Heart left ventricle (tissue), 16 donors: ENCODE measurements at regions of chr7 and their contacts with region 1.

Region 1: GRCh38 chr7:44748045-44748947 is at the start of gene ZMIZ2:
- DNase-seq: peak; percentile 94 to 98 (median 96)
- ATAC-seq: peak; percentile 95 to 99 (median 98)
- H3K4me3 ChIP-seq: peak within 1 kb of the TSS; percentile 83 to 98 (median 92)
- H3K27ac ChIP-seq: peak within 1 kb of the TSS; percentile 92 to 100 (median 96)
- H3K4me1 ChIP-seq: peaks cover 6 to 49% (median 28%) of the 10 kb centered on the region in 12 donors
- H3K27me3 ChIP-seq: no peaks in the 10 kb centered on the region
- CTCF ChIP-seq: no peak
- POLR2A ChIP-seq: peak; percentile 12 to 80
- total RNA-seq, gene ZMIZ2: 18.5 to 71.5 (median 46.5) TPM

Region 2: DNA sequence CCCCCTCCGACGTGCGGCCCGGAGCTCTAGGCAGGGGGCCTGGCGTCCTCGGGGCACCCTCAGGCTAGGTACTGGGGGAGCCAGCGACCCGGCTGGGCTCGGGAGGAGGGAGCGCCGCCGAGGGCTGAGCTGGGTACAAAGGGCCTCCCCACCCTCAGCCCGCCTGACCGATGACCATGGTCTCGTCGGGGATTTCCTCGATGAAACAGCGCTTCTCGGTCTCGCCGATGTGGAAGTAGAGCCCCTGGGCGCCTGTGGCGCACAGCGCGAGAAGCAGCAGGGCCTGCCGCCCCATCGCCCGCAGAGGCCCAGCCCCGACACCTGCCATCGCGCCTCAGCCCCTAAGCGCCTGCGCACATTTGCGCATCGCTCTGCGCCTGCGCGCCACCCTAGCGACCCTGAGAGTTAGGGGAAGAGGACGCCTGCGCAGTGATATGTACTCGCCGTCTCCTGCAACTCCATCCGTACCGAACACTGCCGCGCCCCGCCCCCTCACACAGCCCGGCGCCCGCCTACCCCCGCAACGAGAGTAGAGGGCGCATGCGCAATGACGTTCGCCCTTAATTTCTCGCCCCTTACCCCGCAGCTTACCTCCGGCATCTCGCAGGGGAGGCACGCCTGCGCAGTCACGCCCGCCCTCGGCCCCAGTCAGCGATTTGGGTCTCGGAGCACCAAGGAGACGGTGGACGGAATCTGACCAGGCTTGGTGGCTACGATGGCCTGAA is 166.3 kb before region 1 on chr7 and contains the start of gene TMED4:
- intact Hi-C with region 1: loop called in 3 of 10 experiments (anchors 5 to 10 kb)
- DNase-seq: peak; percentile 100
- ATAC-seq: peak; percentile 98 to 99 (median 98)
- H3K4me3 ChIP-seq: peak within 1 kb of the TSS; percentile 64 to 98 (median 82)
- H3K27ac ChIP-seq: peak within 1 kb of the TSS; percentile 92 to 99 (median 98)
- H3K4me1 ChIP-seq: peaks cover 5 to 29% (median 22%) of the 10 kb centered on the region in 12 donors
- H3K27me3 ChIP-seq: no peaks in the 10 kb centered on the region
- CTCF ChIP-seq: peak in 1 of 12 donors; percentile 11
- POLR2A ChIP-seq: peak in 1 of 2 donors; percentile 80
- total RNA-seq, gene TMED4: 55.4 to 129 (median 68.9) TPM

Region 3: DNA sequence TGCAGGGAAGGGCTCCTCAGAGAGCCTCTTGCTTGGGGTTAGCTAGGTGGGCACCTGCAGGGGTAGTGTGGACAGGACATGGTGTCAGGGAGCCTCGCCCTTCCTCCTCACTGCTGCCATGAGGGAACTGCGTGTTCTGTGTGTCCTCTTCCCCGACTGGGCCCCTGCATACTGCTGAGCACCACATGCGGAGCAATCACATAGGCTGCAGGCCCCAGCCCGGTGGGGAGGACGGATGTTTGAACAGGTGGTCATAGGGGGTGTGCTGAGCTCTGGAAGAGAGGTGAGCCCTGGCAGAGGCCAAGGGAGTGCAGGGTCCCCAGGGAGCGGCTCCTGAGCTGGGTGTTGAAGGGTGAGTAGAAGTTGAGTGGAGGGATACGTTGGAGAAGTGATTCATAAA is 48.0 kb before region 1 on chr7:
- intact Hi-C with region 1: loop called in 2 of 10 experiments (anchors 5 to 10 kb)
- DNase-seq: peak in 1 of 5 donors; percentile 23
- ATAC-seq: no peak
- H3K4me3 ChIP-seq: no peak overlapping the region
- H3K27ac ChIP-seq: peak overlapping the region in 2 of 12 donors; percentile 49 to 77
- H3K4me1 ChIP-seq: peaks cover 0 to 17% (median 0%) of the 10 kb centered on the region in 12 donors
- H3K27me3 ChIP-seq: no peaks in the 10 kb centered on the region
- CTCF ChIP-seq: no peak
- POLR2A ChIP-seq: no peak

Region 4: GRCh38 chr7:44769776-44770662 is 21.7 kb after region 1 on chr7:
- intact Hi-C with region 1: loop called in 1 of 10 experiments (anchors 2 kb)
- DNase-seq: no peak
- ATAC-seq: peak; percentile 26 to 55 (median 35)
- H3K4me3 ChIP-seq: peak overlapping the region in 4 of 12 donors; percentile 7 to 37 (median 19)
- H3K27ac ChIP-seq: peak overlapping the region in 11 of 12 donors; percentile 61 to 87 (median 73)
- H3K4me1 ChIP-seq: peaks cover 14 to 40% (median 33%) of the 10 kb centered on the region in 12 donors
- H3K27me3 ChIP-seq: no peaks in the 10 kb centered on the region
- CTCF ChIP-seq: no peak
- POLR2A ChIP-seq: no peak

Region 5: GRCh38 chr7:44797329-44798251 is 49.3 kb after region 1 on chr7:
- intact Hi-C with region 1: loop called in 9 of 10 experiments (anchors 1 to 5 kb)
- DNase-seq: peak; percentile 91 to 94 (median 92)
- ATAC-seq: peak; percentile 79 to 89 (median 82)
- H3K4me3 ChIP-seq: peak overlapping the region; percentile 60 to 97 (median 80)
- H3K27ac ChIP-seq: peak overlapping the region; percentile 95 to 100 (median 98)
- H3K4me1 ChIP-seq: peaks cover 7 to 35% (median 23%) of the 10 kb centered on the region in 12 donors
- H3K27me3 ChIP-seq: no peaks in the 10 kb centered on the region
- CTCF ChIP-seq: peak in 11 of 12 donors; percentile 21 to 66 (median 53)
- POLR2A ChIP-seq: peak in 1 of 2 donors; percentile 24

Region 6: GRCh38 chr7:45136106-45137060 is 388.1 kb after region 1 on chr7:
- intact Hi-C with region 1: no loop called
- DNase-seq: peak in 3 of 5 donors; percentile 46 to 53 (median 51)
- ATAC-seq: peak; percentile 45 to 86 (median 76)
- H3K4me3 ChIP-seq: no peak overlapping the region
- H3K27ac ChIP-seq: no peak overlapping the region
- H3K4me1 ChIP-seq: peaks cover 0 to 3% (median 0%) of the 10 kb centered on the region in 12 donors
- H3K27me3 ChIP-seq: no peaks in the 10 kb centered on the region
- CTCF ChIP-seq: peak; percentile 74 to 93 (median 86)
- POLR2A ChIP-seq: no peak